ENCODE measurements at regions of chr1 and their contacts with region 1.

Region 1: GRCh38 chr1:53909946-53910345 is 16.0 kb downstream of the DIO1 start:
- DNase-seq: peak; percentile 64
- ATAC-seq: peak; percentile 69
- H3K4me3 ChIP-seq: no peak overlapping the region
- H3K27ac ChIP-seq: no peak overlapping the region
- H3K4me1 ChIP-seq: peaks cover 58% of the 10 kb centered on the region
- H3K27me3 ChIP-seq: no peaks in the 10 kb centered on the region
- CTCF ChIP-seq: no peak
- EP300 ChIP-seq: no peak
- POLR2A ChIP-seq: no peak
- RAD21 ChIP-seq: no peak

Region 2: DNA sequence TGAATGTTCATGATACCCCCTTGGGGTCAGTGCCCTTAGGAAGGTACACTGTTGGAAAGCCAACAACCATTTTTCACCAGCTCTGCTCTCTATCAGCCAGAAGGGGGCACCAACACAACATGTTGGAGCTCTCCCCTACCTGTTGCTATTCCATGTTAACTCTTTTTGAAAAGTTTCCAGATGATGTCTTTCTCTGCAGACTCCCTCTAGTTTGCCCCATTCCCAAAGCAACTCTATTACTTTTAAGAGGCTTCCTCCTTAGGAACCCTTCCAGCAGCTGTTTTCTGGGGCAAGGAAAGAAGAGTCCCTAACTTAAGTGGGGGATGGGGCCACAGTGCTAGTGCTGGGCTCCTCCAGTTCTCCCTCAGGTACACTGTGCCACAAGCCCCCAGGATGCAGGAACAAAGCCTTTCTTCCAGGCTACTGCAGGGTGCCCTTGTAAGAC is 49.0 kb before region 1 on chr1:
- CTCF ChIA-PET with region 1: no interaction called
- POLR2A ChIA-PET with region 1: no interaction called
- in situ Hi-C with region 1: no loop called
- intact Hi-C with region 1: no loop called
- DNase-seq: peak; percentile 69
- ATAC-seq: peak; percentile 97
- H3K4me3 ChIP-seq: no peak overlapping the region
- H3K27ac ChIP-seq: no peak overlapping the region
- H3K4me1 ChIP-seq: no peaks in the 10 kb centered on the region
- H3K27me3 ChIP-seq: no peaks in the 10 kb centered on the region
- CTCF ChIP-seq: peak; percentile 90
- EP300 ChIP-seq: no peak
- POLR2A ChIP-seq: no peak
- RAD21 ChIP-seq: peak; percentile 76; the same call in 1 of the 2 replicates

Region 3: GRCh38 chr1:53889304-53890298 is 20.3 kb before region 1 on chr1 and contains the start of gene YIPF1:
- CTCF ChIA-PET with region 1: no interaction called
- POLR2A ChIA-PET with region 1: interaction called, 10 read pairs
- in situ Hi-C with region 1: no loop called
- intact Hi-C with region 1: no loop called
- DNase-seq: peak; percentile 75
- ATAC-seq: peak; percentile 94
- H3K4me3 ChIP-seq: peak within 1 kb of the TSS; percentile 87 to 100 (median 97)
- H3K27ac ChIP-seq: peak within 1 kb of the TSS; percentile 56
- H3K4me1 ChIP-seq: peaks cover 40% of the 10 kb centered on the region
- H3K27me3 ChIP-seq: no peaks in the 10 kb centered on the region; a peak in 1 of 5 replicates
- CTCF ChIP-seq: no peak
- EP300 ChIP-seq: no peak
- POLR2A ChIP-seq: peak; percentile 26 to 60; a peak in 2 of 4 replicates
- RAD21 ChIP-seq: peak; percentile 10; the same call in 1 of the 2 replicates
- total RNA-seq, gene YIPF1: 19.0 and 21.1 TPM in 2 replicates

Region 4: GRCh38 chr1:53896635-53897229 is 13.2 kb before region 1 on chr1:
- CTCF ChIA-PET with region 1: no interaction called
- POLR2A ChIA-PET with region 1: interaction called, 21 read pairs
- in situ Hi-C with region 1: no loop called
- intact Hi-C with region 1: loop called (anchors 1 kb)
- DNase-seq: peak; percentile 20
- ATAC-seq: no peak
- H3K4me3 ChIP-seq: no peak overlapping the region
- H3K27ac ChIP-seq: peak overlapping the region; percentile 33
- H3K4me1 ChIP-seq: peaks cover 90% of the 10 kb centered on the region
- H3K27me3 ChIP-seq: no peaks in the 10 kb centered on the region
- CTCF ChIP-seq: no peak
- EP300 ChIP-seq: no peak
- POLR2A ChIP-seq: no peak
- RAD21 ChIP-seq: no peak

Region 5: DNA sequence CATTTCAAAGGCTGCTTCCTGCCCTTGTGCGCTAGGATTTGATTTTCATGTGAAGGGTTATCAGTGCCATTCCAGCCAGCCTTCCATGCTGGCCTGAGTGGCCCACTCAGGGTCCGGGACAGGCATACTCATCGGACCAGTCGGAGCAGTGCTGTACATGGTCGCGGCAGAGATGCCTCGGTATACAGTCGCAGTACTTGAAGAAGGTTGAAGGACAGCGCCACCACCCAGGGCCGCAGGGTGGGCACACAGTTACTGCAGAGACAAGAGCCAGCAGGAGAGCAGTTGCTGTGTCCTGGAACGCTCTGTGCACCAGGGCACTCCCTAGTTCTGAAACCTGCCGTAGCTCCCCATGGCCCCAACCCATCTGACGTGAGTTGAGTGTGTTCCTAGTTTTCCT is 98.9 kb after region 1 on chr1:
- CTCF ChIA-PET with region 1: no interaction called
- POLR2A ChIA-PET with region 1: no interaction called
- in situ Hi-C with region 1: no loop called
- intact Hi-C with region 1: no loop called
- DNase-seq: no peak
- ATAC-seq: no peak
- H3K4me3 ChIP-seq: no peak overlapping the region
- H3K27ac ChIP-seq: no peak overlapping the region
- H3K4me1 ChIP-seq: peaks cover 28% of the 10 kb centered on the region
- H3K27me3 ChIP-seq: no peaks in the 10 kb centered on the region
- CTCF ChIP-seq: no peak
- EP300 ChIP-seq: no peak
- POLR2A ChIP-seq: no peak
- RAD21 ChIP-seq: no peak